ENCODE measurements at regions of chr3 and their contacts with region 1.

Region 1: DNA sequence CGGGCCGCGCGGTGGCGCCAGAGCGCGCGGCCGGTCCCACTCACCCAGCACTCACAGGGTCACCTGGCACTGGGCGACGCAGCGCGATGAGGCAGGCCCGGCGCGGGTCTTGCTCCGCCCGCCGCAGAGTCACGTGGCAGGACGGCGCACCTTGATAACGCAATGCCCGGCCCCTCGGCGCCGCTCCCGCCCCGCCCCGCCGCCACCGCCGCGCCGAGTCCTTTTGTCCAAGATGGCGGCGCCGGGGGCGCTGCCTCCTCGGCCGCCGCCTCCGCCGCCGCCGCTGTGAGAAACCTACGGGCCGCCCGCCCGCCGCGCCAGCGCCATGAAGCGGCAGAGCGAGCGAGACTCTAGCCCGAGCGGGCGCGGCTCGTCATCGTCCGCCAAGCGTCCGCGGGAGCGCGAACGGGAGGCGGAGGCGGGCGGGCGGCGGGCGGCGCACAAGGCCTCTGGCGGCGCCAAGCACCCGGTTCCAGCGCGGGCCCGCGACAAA is at the start of gene RBM15B:
- DNase-seq: peak; percentile 99
- H3K4me3 ChIP-seq: peak within 1 kb of the TSS; percentile 47 to 87 (median 80)
- H3K27ac ChIP-seq: peak within 1 kb of the TSS; percentile 85 to 95 (median 90)
- H3K4me1 ChIP-seq: peaks cover 0 to 76% (median 65%) of the 10 kb centered on the region in 4 donors
- H3K27me3 ChIP-seq: no peaks in the 10 kb centered on the region
- CTCF ChIP-seq: peak in 1 of 4 experiments; percentile 81
- EP300 ChIP-seq: peak in 1 of 4 donors; percentile 58
- POLR2A ChIP-seq: no peak
- total RNA-seq, gene RBM15B: 18.9 to 29.5 (median 23.9) TPM

Region 2: GRCh38 chr3:50358911-50359759 is 1032.0 kb before region 1 on chr3 and contains the start of gene TMEM115:
- intact Hi-C with region 1: loop called (anchors 10 kb)
- DNase-seq: peak; percentile 99
- H3K4me3 ChIP-seq: peak within 1 kb of the TSS; percentile 69 to 84 (median 78)
- H3K27ac ChIP-seq: peak within 1 kb of the TSS; percentile 82 to 93 (median 91)
- H3K4me1 ChIP-seq: peaks cover 0 to 50% (median 34%) of the 10 kb centered on the region in 4 donors
- H3K27me3 ChIP-seq: no peaks in the 10 kb centered on the region
- CTCF ChIP-seq: no peak
- EP300 ChIP-seq: no peak
- POLR2A ChIP-seq: peak in 1 of 2 donors; percentile 59
- total RNA-seq, gene TMEM115: 40.5 to 45.7 (median 44.3) TPM

Region 3: GRCh38 chr3:51519848-51520247 is 128.7 kb after region 1 on chr3:
- intact Hi-C with region 1: no loop called
- DNase-seq: no peak
- H3K4me3 ChIP-seq: no peak overlapping the region
- H3K27ac ChIP-seq: no peak overlapping the region
- H3K4me1 ChIP-seq: no peaks in the 10 kb centered on the region
- H3K27me3 ChIP-seq: no peaks in the 10 kb centered on the region
- CTCF ChIP-seq: no peak
- EP300 ChIP-seq: no peak
- POLR2A ChIP-seq: no peak

Region 4: DNA sequence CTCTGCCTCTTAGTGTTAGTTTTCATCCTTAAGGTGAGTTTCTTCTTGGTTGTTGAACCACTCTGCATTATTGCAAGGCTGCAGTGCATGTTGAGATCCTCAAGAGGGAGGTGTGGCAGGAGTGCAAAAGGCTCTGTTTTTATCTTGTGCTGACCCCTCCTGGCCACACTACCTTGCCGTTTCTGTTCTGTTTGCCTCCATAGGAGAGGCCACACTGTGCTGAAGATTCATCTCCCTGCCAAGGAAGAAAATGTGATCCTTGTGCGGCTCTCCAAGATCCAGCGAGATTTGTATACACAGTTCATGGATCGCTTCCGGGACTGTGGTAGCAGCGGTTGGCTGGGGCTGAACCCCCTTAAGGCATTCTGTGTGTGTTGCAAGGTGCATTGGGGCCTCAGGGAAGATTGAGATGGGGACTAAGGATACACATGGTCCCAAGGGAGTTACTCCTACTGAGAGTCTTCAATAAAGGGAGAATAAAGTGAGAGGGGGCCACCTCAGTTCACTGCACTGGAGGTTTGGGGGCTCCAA is 246.9 kb after region 1 on chr3:
- intact Hi-C with region 1: no loop called
- DNase-seq: no peak
- H3K4me3 ChIP-seq: no peak overlapping the region
- H3K27ac ChIP-seq: no peak overlapping the region
- H3K4me1 ChIP-seq: no peaks in the 10 kb centered on the region
- H3K27me3 ChIP-seq: no peaks in the 10 kb centered on the region
- CTCF ChIP-seq: peak in 3 of 4 experiments; percentile 39 to 60 (median 44)
- EP300 ChIP-seq: no peak
- POLR2A ChIP-seq: no peak

Region 5: DNA sequence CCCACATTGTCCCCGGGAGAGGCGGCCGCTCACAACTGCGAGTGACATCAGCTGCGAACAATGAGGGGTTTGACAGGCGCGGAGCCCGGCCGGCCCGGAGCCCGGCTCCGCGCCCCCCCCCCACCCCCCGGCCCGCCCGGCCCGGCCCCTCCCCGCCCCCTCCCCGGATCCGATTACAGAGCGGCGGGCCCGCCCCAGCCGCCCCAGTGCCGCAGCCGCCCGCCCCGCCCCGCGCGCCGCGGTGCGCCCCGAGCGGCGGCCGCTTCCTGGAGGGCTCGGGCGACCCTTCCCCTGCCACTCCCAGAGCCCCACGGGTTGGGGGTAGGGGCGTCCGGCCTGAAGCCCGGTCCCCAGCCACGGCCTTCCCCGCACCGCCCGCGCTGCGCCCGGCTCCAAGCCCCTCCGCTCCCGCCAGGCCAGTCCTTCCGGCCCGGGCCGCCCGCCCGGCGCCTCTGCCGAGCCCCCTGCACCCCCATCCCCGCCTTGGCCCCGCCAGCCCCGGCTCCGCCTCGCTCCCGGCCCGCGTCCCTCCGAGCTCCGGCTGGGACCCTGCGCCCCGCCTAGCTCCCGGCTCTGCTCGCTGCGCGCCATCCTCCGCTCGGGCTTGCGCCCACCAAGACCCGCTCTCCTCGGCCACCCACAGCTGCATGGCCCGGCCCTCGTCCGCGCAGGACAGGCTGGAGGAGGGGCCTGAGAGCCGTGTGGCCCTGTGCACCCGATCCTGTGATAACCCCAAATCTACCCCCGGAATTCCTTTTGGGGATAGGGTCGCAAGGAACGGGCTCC is 576.5 kb after region 1 on chr3 and contains the start of gene PCBP4:
- intact Hi-C with region 1: loop called (anchors 10 kb)
- DNase-seq: peak; percentile 85
- H3K4me3 ChIP-seq: peak within 1 kb of the TSS; percentile 66 to 95 (median 80)
- H3K27ac ChIP-seq: peak within 1 kb of the TSS; percentile 92 to 99 (median 94)
- H3K4me1 ChIP-seq: peaks cover 0 to 53% (median 43%) of the 10 kb centered on the region in 4 donors
- H3K27me3 ChIP-seq: no peaks in the 10 kb centered on the region
- CTCF ChIP-seq: no peak
- EP300 ChIP-seq: no peak
- POLR2A ChIP-seq: no peak
- total RNA-seq, gene PCBP4: 256 to 292 (median 268) TPM